ENCODE measurements at regions of chr11 and their contacts with region 1.

Region 1: DNA sequence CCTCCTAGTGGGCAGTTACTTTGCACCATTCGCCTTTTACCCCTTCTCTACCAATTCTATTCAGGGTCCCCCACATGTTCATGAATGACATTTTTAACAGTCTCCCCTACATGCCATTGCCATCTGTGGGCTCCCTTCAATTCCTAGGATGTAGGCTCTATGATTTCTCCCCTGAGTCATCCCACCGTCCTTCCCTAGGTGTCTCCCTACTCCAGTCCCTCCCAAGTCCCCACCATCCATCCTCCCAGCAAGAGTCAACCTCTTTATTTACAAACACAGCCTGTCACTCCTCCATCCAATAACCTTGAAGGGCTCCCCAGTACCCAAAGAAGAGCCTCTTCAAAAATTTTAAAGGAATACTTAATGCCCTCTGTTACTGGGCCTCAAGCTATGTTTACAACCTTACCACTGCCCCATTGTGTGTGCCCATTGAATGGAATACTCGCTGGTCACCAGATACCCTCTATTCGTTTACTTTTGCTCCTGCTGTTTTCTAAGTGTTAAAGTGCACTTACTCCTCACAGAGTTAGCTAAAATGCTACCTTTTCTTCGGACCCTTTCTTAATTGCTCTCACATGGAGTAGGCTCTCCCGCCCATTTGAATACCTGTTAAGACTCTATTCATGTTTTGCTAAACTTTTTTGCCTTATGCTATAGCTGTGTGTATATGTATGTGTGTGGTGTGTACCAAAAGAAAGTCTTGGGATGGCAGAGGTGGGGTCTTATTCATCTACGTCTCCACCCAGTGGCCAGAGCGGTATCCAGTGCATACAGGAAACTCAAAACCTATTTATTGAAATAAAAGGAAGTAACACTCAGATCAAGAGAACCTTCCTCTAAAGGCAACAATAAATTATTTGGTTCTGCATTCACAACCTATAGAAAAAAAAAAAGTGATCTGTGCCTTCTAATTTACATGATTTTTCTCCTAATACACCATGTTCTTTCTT is 235.8 kb upstream of the CCDC90B start:
- DNase-seq: peak; percentile 52 to 58
- H3K4me3 ChIP-seq: no peak overlapping the region
- H3K4me3 Mint-ChIP-seq: no peak overlapping the region
- H3K27ac Mint-ChIP-seq: no peak overlapping the region
- H3K4me1 ChIP-seq: no peaks in the 10 kb centered on the region
- H3K4me1 Mint-ChIP-seq: no peaks in the 10 kb centered on the region
- H3K27me3 ChIP-seq: no peaks in the 10 kb centered on the region
- H3K27me3 Mint-ChIP-seq: no peaks in the 10 kb centered on the region
- CTCF ChIP-seq: peak; percentile 58 to 59

Region 2: DNA sequence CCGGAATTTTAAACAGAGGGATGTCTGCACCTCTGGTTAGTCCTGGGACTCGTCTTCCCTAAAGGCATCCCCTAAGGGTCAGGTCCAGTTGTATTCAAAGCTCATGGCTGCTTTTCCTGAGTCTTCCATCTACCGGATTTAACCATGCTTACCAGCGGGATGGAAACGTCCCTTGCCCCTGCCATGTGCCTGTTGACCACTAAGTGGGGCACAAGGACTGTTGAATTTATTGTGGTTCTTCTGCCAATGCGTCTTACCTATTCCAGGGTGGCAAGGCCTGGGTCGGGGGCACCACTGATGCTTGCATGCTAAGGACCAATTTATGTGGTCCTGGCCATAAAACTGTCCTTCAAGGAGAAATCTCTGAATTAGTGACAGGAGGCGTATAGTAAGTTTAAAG is 302.8 kb before region 1 on chr11:
- CTCF ChIA-PET with region 1: no interaction called
- POLR2A ChIA-PET with region 1: no interaction called
- intact Hi-C with region 1: loop called (anchors 5 kb)
- DNase-seq: peak in 1 of 2 experiments; percentile 56
- H3K4me3 ChIP-seq: no peak overlapping the region
- H3K4me3 Mint-ChIP-seq: no peak overlapping the region
- H3K27ac Mint-ChIP-seq: no peak overlapping the region
- H3K4me1 ChIP-seq: no peaks in the 10 kb centered on the region
- H3K4me1 Mint-ChIP-seq: no peaks in the 10 kb centered on the region
- H3K27me3 ChIP-seq: no peaks in the 10 kb centered on the region; the same call in 1 of the 2 replicates
- H3K27me3 Mint-ChIP-seq: no peaks in the 10 kb centered on the region
- CTCF ChIP-seq: peak; percentile 75 to 79

Region 3: DNA sequence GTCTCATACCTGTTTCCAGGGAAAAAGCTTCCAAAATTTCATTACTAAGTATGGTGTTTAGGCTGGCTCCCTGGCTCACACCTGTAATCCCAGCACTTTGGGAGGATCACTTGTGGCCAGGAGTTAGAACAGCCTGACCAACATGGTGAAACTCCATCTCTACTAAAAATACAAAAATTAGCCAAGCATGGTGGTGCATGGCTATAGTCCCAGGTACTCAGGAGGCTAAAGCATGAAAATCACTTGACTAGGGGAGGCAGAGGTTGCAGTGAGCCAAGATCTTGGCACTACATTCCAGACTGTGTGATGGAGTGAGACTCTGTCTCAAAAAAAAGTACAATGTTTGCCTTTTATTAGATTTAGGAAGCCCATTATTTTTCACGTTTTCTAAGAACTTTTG is 95.7 kb after region 1 on chr11:
- CTCF ChIA-PET with region 1: no interaction called
- POLR2A ChIA-PET with region 1: no interaction called
- intact Hi-C with region 1: loop called (anchors 5 kb)
- DNase-seq: no peak
- H3K4me3 ChIP-seq: no peak overlapping the region
- H3K4me3 Mint-ChIP-seq: no peak overlapping the region
- H3K27ac Mint-ChIP-seq: no peak overlapping the region
- H3K4me1 ChIP-seq: no peaks in the 10 kb centered on the region
- H3K4me1 Mint-ChIP-seq: peaks cover 6% of the 10 kb centered on the region
- H3K27me3 ChIP-seq: no peaks in the 10 kb centered on the region
- H3K27me3 Mint-ChIP-seq: no peaks in the 10 kb centered on the region
- CTCF ChIP-seq: no peak

Region 4: GRCh38 chr11:83671289-83671688 is 149.4 kb after region 1 on chr11:
- CTCF ChIA-PET with region 1: no interaction called
- POLR2A ChIA-PET with region 1: no interaction called
- intact Hi-C with region 1: loop called (anchors 2 kb)
- DNase-seq: no peak
- H3K4me3 ChIP-seq: no peak overlapping the region
- H3K4me3 Mint-ChIP-seq: no peak overlapping the region
- H3K27ac Mint-ChIP-seq: no peak overlapping the region
- H3K4me1 ChIP-seq: peaks cover 10% of the 10 kb centered on the region; the same call in 1 of the 2 replicates
- H3K4me1 Mint-ChIP-seq: no peaks in the 10 kb centered on the region
- H3K27me3 ChIP-seq: no peaks in the 10 kb centered on the region
- H3K27me3 Mint-ChIP-seq: no peaks in the 10 kb centered on the region
- CTCF ChIP-seq: peak in 1 of 2 experiments; percentile 11

Measured in Caco-2 (cell line).